ENCODE measurements at regions of chr19 and their contacts with region 1.

Region 1: DNA sequence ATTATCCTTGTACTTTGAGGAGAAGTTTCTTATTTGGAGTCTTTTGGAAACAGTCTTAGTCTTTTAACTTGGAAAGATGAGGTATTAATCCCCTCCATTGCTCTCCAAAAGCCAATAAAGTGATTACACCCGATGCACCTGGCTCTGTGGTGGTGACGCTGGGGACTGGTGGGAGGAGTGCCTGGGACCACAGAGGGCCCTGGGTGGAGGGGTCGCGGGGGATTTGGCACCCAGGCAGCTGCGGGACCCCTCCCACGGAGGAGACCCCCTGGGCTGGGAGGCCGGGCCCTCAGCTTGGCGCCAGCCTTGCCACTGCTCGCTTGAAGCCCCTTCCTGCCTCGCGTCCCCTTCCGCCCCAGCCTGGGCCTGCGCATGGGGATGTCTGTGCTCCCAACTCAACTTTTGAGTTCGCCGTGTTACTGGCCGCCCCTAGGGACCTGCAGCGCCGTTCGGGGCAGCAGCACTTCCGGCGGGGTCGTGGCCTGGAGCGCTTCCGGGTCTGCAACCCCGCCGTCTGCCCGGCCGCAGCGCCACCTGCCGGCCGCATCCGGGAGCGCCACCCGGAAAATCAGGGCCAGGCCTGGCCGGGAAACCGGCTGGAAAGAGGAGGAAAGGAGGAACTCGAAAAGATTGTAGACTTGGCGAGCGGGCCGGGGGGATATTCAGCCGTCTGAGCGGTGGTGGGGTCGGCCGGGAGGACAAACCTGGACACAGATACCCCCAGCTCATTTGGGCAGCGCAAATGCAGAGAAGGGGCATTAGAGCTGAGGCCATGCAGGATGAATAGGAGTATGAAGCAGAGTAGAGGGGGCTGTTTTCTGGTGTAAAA is 8.4 kb downstream of the PEAK3 start:
- H3K4me3 Mint-ChIP-seq: peak overlapping the region; percentile 90
- H3K27ac Mint-ChIP-seq: peak overlapping the region; percentile 98
- H3K4me1 Mint-ChIP-seq: peaks cover 61% of the 10 kb centered on the region
- H3K27me3 Mint-ChIP-seq: no peaks in the 10 kb centered on the region

Region 2: GRCh38 chr19:2236314-2237050 is 37.1 kb before region 1 on chr19 and contains the starts of genes PLEKHJ1 and SF3A2:
- intact Hi-C with region 1: loop called (anchors 1 kb)
- H3K4me3 Mint-ChIP-seq: peak within 1 kb of the TSS; percentile 94
- H3K27ac Mint-ChIP-seq: peak within 1 kb of the TSS; percentile 98
- H3K4me1 Mint-ChIP-seq: peaks cover 78% of the 10 kb centered on the region
- H3K27me3 Mint-ChIP-seq: no peaks in the 10 kb centered on the region

Region 3: DNA sequence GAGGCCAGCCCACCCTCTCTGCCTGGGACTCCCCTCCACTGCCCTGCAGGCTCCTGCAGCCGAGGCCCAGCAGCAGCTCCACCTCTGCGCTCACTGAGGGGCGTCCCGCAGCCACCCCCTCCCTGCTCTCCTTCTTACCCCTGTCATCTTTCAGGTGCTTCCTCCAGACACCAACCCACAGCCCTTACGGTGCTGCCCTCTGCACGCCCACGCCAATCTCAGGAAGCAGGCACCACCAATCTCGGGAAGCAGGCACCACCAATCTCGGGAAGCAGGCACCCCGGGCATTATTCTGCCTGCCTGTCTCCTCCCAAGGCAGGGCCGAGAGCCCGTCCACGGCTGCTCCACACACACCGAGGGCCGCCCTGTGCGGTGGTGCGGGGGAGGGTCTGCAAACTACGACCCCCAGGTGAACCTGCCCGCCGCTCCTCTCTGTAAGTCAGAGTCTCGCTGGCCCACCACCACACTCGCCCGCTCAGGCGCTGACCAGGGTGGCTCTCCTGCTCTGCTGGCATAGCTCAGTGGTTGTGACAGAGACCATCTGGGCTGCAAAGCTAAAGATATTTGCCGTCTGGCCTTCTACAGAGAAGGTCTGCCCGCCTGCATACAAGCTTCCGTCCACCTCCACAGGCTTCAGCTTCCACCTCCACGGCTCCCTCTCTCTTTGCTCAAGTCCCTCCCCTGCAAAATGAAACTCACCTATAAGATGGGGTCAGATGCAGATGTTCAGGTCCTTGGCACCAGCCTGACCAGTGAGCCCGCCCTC is 51.9 kb after region 1 on chr19:
- intact Hi-C with region 1: no loop called
- H3K4me3 Mint-ChIP-seq: no peak overlapping the region
- H3K27ac Mint-ChIP-seq: peak overlapping the region; percentile 9
- H3K4me1 Mint-ChIP-seq: peaks cover 51% of the 10 kb centered on the region
- H3K27me3 Mint-ChIP-seq: no peaks in the 10 kb centered on the region